HCT116 (cell line): ENCODE measurements at regions of chr7 and their contacts with region 1.

Region 1: GRCh38 chr7:15667991-15668390 is 18.5 kb downstream of the MEOX2 start:
- DNase-seq: no peak
- ATAC-seq: no peak
- H3K4me3 ChIP-seq: no peak overlapping the region
- H3K27ac ChIP-seq: no peak overlapping the region
- H3K4me1 ChIP-seq: no peaks in the 10 kb centered on the region
- H3K27me3 ChIP-seq: no peaks in the 10 kb centered on the region
- CTCF ChIP-seq: no peak
- POLR2A ChIP-seq: no peak
- RAD21 ChIP-seq: no peak

Region 2: GRCh38 chr7:15158141-15158810 is 509.7 kb before region 1 on chr7:
- CTCF ChIA-PET with region 1: no interaction called
- POLR2A ChIA-PET with region 1: no interaction called
- RAD21 ChIA-PET with region 1: no interaction called
- intact Hi-C with region 1: no loop called
- DNase-seq: no peak
- ATAC-seq: no peak
- H3K4me3 ChIP-seq: no peak overlapping the region
- H3K27ac ChIP-seq: no peak overlapping the region
- H3K4me1 ChIP-seq: no peaks in the 10 kb centered on the region
- H3K27me3 ChIP-seq: no peaks in the 10 kb centered on the region
- CTCF ChIP-seq: no peak
- POLR2A ChIP-seq: no peak
- RAD21 ChIP-seq: no peak

Region 3: GRCh38 chr7:15703732-15704131 is 35.7 kb after region 1 on chr7:
- CTCF ChIA-PET with region 1: no interaction called
- POLR2A ChIA-PET with region 1: no interaction called
- RAD21 ChIA-PET with region 1: no interaction called
- intact Hi-C with region 1: loop called (anchors 1 kb)
- DNase-seq: no peak
- ATAC-seq: no peak
- H3K4me3 ChIP-seq: no peak overlapping the region
- H3K27ac ChIP-seq: no peak overlapping the region
- H3K4me1 ChIP-seq: no peaks in the 10 kb centered on the region
- H3K27me3 ChIP-seq: no peaks in the 10 kb centered on the region
- CTCF ChIP-seq: no peak
- POLR2A ChIP-seq: no peak
- RAD21 ChIP-seq: no peak

Region 4: GRCh38 chr7:16543456-16543855 is 875.5 kb after region 1 on chr7:
- CTCF ChIA-PET with region 1: no interaction called
- POLR2A ChIA-PET with region 1: no interaction called
- RAD21 ChIA-PET with region 1: no interaction called
- intact Hi-C with region 1: no loop called
- DNase-seq: no peak
- ATAC-seq: peak; percentile 49; the same call in 1 of the 2 replicates
- H3K4me3 ChIP-seq: no peak overlapping the region
- H3K27ac ChIP-seq: no peak overlapping the region
- H3K4me1 ChIP-seq: 0 out of 4 replicates have a peak, but pooled peaks cover 0 to 5% of the 10 kb centered on the region in 2 experiments
- H3K27me3 ChIP-seq: no peaks in the 10 kb centered on the region
- CTCF ChIP-seq: no peak
- POLR2A ChIP-seq: no peak
- RAD21 ChIP-seq: no peak